Activated B cell treated with CpG ODN at 0.5 μM for 24 hours (primary cell): ENCODE measurements at regions of chr7 and their contacts with region 1.

Region 1: GRCh38 chr7:11792166-11792565 is 39.8 kb downstream of the THSD7A start:
- DNase-seq: no peak
- ATAC-seq: no peak
- H3K4me3 Mint-ChIP-seq: no peak overlapping the region
- H3K27ac Mint-ChIP-seq: no peak overlapping the region
- H3K4me1 Mint-ChIP-seq: no peaks in the 10 kb centered on the region
- H3K27me3 Mint-ChIP-seq: no peaks in the 10 kb centered on the region
- CTCF ChIP-seq: no peak

Region 2: DNA sequence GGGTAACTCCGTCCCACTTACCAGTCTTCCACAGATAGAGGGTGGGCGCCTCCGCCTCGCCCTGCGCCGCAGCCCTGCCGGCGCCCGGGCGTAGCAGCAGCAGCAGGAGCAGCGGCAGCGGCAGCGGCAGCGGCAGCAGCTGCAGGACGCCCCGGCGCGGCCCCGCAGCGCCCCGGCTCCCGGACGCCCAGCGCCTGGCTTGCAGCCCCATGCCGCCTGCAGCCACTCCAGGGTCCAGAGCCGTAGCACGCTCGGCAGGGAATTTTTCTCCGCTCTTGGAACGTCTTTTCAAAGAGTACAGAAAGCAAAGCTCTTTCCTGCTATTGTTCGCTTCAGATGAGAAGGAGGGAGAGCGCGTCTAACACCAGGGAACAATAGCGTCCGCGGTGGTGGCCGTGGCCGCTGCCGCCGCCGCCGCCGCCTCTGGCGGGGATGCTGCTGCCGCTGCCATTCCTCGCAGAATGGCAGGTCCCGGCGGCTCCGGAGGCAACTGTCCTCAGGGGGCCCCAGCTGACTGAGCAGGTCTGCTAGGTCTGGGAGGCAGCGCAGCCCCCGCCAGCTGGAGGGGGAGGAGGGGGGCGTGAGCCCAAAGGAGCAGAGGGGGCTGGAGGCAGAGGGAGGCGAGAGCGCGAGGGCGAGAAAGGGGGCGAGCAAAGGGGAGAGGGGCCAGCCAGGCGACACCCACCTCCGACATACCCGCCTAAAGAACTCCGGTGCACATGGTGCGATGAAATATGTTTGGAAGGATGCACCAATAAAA is 39.8 kb after region 1 on chr7 and contains the start of gene THSD7A:
- CTCF ChIA-PET with region 1: no interaction called
- POLR2A ChIA-PET with region 1: no interaction called
- intact Hi-C with region 1: loop called (anchors 2 kb)
- DNase-seq: no peak
- ATAC-seq: no peak
- H3K4me3 Mint-ChIP-seq: no peak within 1 kb of the TSS
- H3K27ac Mint-ChIP-seq: no peak within 1 kb of the TSS
- H3K4me1 Mint-ChIP-seq: peaks cover 7% of the 10 kb centered on the region
- H3K27me3 Mint-ChIP-seq: peaks cover 16% of the 10 kb centered on the region
- CTCF ChIP-seq: no peak
- total RNA-seq, gene THSD7A: not detected in 2 replicates